ENCODE measurements at regions of chr13 and their contacts with region 1.

Region 1: DNA sequence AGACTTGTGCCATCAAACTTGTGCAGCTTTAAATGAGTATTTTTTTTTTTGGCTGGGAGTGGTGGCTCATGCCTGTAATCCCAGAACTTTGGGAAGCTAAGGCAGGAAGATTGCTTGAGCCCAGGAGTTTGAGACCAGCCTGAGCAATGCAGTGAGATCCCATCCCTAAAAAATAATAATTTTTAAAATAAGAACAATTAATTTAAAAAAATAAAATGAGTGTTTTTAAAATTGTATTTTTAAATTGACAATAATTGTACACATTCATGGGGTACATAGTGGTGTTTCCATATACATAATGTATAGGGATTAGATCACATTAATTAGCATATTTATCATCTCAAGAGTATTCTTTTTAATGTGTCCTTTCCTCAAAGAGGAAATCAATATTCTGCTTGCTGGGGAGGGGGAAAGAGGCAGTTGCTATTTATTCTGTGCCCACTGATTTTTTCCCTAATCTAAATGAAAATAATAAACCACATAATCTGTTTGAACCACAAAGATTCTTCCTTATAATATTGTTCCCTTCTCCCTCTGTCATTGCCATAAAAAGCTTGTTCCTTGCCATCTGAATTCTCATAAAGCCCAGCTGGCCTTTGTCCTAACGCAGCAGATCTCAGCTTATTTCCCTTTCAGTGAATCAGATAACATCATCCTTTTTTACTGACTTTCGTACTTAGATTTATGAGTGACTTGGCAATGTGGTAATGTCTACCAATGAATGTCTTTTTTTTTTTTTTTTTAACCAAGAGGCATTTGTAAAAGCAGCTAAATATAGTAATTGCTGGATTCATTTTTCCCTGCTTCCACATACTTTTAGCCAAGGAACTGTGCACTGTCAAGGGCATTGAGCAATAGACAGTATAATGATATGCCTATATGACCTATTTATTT is 81.8 kb upstream of the RUBCNL start:
- DNase-seq: peak; percentile 26
- ATAC-seq: peak; percentile 40
- H3K4me3 ChIP-seq: no peak overlapping the region
- H3K27ac ChIP-seq: no peak overlapping the region
- H3K4me1 ChIP-seq: no peaks in the 10 kb centered on the region; the same call in 1 of the 2 replicates
- H3K27me3 ChIP-seq: no peaks in the 10 kb centered on the region
- CTCF ChIP-seq: no peak

Region 2: DNA sequence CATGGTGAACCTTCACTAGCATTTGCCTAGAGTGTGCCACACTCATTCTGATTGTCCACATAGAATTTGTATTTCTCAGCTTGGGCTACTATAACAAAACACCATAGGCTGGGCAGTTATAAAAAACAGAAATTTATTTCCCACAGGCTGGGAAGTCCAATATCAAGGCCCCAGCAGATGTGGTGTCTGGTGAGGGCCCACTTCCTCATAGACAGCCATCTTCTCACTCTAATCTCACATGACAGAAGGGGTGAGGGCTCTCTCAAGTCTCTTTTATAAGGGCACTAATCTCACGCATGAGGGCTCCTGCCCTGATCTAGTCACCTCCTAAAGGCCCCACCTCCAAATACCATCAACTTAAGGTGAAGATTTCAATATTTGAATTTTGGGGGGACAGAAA is 203.5 kb before region 1 on chr13:
- CTCF ChIA-PET with region 1: no interaction called
- POLR2A ChIA-PET with region 1: no interaction called
- intact Hi-C with region 1: no loop called
- DNase-seq: no peak
- ATAC-seq: no peak
- H3K4me3 ChIP-seq: no peak overlapping the region
- H3K27ac ChIP-seq: no peak overlapping the region
- H3K4me1 ChIP-seq: no peaks in the 10 kb centered on the region
- H3K27me3 ChIP-seq: peaks cover 17% of the 10 kb centered on the region
- CTCF ChIP-seq: no peak

Region 3: GRCh38 chr13:46530084-46530935 is 61.5 kb after region 1 on chr13:
- CTCF ChIA-PET with region 1: no interaction called
- POLR2A ChIA-PET with region 1: interaction called, 10 read pairs
- intact Hi-C with region 1: no loop called
- DNase-seq: peak; percentile 80
- ATAC-seq: peak; percentile 84
- H3K4me3 ChIP-seq: no peak overlapping the region
- H3K27ac ChIP-seq: peak overlapping the region; percentile 62
- H3K4me1 ChIP-seq: peaks cover 32% of the 10 kb centered on the region
- H3K27me3 ChIP-seq: no peaks in the 10 kb centered on the region
- CTCF ChIP-seq: no peak

Measured in PC-3 (cell line).